ENCODE measurements at regions of chr5 and their contacts with region 1.

Region 1: DNA sequence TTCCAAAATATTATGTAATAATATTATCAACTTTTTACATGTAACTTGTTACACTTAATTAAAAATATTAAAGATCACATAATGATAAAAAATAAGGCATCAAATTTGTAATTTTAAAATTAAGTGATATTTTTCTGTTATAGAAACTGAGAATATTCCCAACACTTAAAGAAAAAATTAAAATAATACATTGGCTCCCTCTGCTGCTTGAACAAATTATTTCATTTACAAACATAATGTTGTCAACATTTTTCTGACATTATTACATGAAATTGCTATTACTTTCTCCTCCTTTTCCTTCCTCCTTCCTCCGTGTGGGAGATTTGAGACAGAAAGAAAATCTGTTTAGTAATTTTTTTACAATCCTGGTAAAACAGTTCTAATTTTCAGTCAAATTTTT is 42.3 kb downstream of the RNF180 start:
- DNase-seq: no peak

Region 2: DNA sequence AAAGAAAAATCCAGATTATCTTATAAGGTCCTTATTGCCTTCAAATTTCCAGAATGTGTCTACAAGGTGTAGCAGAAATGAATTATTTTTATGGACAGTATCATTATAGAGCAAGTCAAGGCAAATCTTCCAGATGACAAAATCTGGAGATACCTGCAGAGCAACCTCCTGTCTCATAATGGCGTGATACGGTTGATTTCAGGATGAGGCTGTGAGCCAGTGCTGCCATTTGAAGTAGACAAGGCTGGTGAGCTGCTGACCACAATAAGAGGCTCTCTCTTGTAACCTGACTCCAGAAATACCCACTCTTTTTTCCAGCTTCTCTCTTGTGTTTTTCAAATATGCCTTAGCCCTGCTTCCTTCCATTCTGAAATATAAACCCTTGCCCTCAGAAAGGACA is 353.9 kb before region 1 on chr5:
- intact Hi-C with region 1: no loop called
- DNase-seq: no peak

Region 3: GRCh38 chr5:64074533-64074932 is 133.4 kb before region 1 on chr5:
- intact Hi-C with region 1: loop called in 1 of 2 experiments (anchors 10 kb)
- DNase-seq: no peak

Region 4: DNA sequence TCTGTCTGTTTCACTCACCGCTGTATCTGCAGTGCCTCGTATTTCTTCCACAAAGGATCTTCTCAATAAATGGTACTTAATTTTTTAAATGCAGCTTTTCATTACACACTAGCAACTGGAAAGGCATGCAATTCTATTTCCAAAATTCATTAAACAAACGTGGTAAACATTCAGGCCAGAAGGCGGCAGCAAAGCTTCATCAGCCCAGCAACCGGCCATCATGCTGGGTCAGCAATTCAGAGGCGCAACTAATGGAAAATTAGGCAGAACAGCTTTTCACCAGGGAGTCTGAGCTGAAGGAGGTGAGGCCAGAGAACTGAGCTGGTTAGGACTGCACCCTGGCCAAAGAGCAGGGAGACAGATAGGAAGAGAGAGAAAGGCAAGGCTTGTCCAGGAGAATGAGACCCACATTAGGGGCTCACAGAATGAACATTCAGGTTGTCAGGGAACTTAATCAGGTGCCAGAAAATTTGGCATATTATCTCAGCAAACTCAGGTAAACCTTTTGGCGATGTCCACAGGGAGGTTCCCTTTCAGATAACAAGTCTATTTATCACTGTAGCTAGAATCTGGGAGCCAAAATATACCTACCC is 60.0 kb before region 1 on chr5:
- intact Hi-C with region 1: loop called (anchors 5 to 10 kb)
- DNase-seq: peak; percentile 86

Region 5: GRCh38 chr5:64158827-64159226 is 49.2 kb before region 1 on chr5:
- intact Hi-C with region 1: loop called in 1 of 2 experiments (anchors 10 kb)
- DNase-seq: no peak

Region 6: GRCh38 chr5:64722588-64722987 is 514.6 kb after region 1 on chr5:
- intact Hi-C with region 1: no loop called
- DNase-seq: no peak